Sciatic nerve (tissue), 2 donors: ENCODE measurements at regions of chr2 and their contacts with region 1.

Region 1: DNA sequence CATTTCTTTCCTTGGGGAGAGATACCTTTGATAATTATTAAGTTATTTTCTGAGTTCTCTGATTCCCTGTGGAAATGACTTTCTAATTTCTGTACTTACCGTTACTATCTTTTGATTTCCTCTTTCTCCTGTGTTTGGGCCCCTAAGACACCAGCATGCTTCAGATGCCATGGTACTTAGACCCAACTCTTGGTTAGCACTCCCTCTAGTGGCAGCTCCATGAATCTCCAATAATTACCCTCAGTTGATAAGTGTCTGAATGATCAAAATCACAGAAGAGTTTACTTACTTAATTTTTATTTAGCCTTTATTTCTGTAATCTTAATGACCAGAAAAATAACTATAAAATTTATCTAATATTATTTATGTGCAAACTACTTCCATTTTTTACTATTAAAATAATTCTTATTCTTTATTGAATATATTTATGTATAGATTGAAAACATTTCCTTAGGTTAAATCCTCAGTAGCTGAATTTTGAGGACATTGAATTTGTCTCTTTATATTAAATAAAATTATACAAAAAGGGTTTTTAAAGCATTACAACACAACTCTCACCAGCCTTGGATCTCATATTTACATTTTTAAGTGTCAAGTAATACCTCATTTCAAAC is 300.4 kb downstream of the KCNS3 start:
- DNase-seq: no peak
- ATAC-seq: peak; percentile 66

Region 2: GRCh38 chr2:17851731-17852585 is 326.9 kb before region 1 on chr2:
- intact Hi-C with region 1: loop called (anchors 5 kb)
- DNase-seq: peak; percentile 64
- ATAC-seq: peak; percentile 73